Lower leg skin (tissue), 4 donors: ENCODE measurements at regions of chr1 and their contacts with region 1.

Region 1: DNA sequence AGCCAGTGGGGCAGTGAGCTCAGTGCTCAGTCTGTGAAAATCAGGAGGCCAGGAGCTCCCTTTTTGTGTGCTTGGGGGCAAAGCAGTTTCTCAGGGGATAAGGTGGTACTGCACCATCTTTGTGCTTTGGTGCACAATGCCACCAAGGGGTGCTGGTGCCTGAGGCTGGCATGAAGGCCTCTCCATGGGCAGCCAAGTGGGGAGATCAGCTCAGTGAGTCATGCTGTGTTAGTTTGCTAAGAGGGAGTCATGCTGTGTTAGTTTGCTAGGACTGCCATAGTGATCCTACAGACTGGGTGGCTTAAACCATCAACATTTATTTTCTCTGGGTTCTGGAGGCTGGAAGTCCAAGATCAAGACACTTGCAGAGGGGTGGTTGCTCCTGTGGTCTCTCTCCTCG is 428.1 kb downstream of the PRDM2 start:
- DNase-seq: no peak
- H3K4me3 ChIP-seq: no peak overlapping the region
- CTCF ChIP-seq: no peak
- POLR2A ChIP-seq: no peak

Region 2: GRCh38 chr1:14704846-14705245 is 576.8 kb after region 1 on chr1:
- intact Hi-C with region 1: loop called (anchors 10 kb)
- DNase-seq: no peak
- H3K4me3 ChIP-seq: no peak overlapping the region
- CTCF ChIP-seq: no peak
- POLR2A ChIP-seq: no peak